Naive thymus-derived CD4-positive, alpha-beta T cell (primary cell): ENCODE measurements at regions of chr7 and their contacts with region 1.

Region 1: DNA sequence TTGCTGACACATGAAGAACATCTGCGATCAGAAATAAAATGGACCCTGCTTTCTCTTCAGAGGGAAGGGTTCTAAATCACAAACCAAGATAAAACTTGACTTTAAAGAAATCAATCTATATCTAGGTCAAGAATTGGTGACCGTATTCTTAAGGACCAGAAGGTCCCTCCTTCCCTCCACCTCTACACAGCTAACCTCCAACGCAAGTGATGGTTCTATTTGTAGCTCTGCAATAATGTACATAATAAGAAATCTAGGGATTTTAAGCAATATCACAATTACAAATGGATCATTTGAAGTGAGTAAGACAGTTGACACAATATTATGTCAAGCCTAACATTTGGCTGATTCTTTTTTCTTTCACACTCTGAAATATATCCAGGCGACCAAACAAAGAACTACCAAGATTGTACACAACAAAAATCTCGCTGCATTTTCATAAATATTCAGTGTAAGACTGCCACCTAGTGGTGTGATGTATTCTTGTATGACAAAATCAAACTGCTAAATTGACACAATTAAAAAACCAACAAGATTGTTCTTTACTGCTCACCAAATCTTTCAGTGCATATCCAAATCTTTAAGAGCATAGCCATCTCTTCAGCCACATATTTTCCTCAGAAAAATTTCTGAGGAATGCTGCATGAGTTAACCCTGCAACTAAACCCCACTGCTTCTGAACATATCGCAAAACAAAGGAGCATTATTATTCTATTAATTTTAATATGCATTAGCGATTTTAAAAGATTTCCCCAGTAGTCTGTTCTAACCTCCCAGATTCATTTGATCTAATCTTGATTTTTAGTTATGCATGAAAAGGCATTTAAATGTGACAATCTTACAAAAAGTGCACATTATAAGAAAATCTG is 44.5 kb downstream of the ICA1 start:
- DNase-seq: peak in 7 of 9 donors; percentile 42 to 76 (median 68)
- ATAC-seq: peak; percentile 84
- H3K4me3 ChIP-seq: no peak overlapping the region
- H3K4me3 Mint-ChIP-seq: no peak overlapping the region
- H3K27ac ChIP-seq: no peak overlapping the region
- H3K27ac Mint-ChIP-seq: peak overlapping the region in 1 of 9 donors; percentile 22
- H3K4me1 ChIP-seq: no peaks in the 10 kb centered on the region
- H3K4me1 Mint-ChIP-seq: peaks cover 0 to 16% (median 3%) of the 10 kb centered on the region in 7 donors
- H3K27me3 ChIP-seq: no peaks in the 10 kb centered on the region
- H3K27me3 Mint-ChIP-seq: no peaks in the 10 kb centered on the region

Region 2: DNA sequence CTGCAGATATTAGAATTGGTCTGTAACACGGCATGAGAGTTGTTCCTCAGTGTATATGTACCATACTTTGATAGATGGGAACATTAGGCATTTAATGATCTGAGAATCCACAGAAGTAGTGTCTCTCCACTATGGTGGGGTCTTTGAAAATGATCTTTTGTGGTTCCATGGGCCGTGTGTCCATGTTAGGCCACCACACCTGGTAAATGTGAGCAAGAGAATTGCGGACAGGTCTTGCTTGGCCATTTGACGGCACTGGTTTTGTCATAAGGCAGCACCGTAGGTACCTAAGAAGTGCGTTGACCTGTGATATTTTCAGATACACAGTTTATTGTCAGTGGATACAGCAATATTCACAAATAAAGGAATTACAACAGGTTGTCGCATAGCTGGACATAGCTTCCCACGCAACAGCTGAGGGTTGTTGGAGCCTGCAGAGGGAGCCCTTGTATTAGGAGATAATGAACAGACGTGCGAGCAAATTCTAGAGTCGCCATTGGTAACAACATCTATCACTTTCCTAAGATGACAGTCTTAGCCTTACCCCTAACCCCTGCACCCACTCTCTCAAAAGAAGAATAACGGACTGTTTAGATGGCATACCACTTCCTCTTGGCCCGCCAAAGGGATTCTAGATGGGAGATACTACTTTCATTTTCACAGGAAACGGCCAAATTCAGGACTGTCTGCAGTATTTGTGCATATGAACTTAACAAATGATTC is 793.1 kb before region 1 on chr7:
- CTCF ChIA-PET with region 1: no interaction called
- POLR2A ChIA-PET with region 1: no interaction called
- intact Hi-C with region 1: loop called (anchors 1 to 10 kb)
- DNase-seq: peak in 6 of 9 donors; percentile 8 to 44 (median 25)
- ATAC-seq: peak; percentile 73
- H3K4me3 ChIP-seq: peak overlapping the region; percentile 59
- H3K4me3 Mint-ChIP-seq: peak overlapping the region in 8 of 10 donors; percentile 74 to 89 (median 82)
- H3K27ac ChIP-seq: no peak overlapping the region
- H3K27ac Mint-ChIP-seq: peak overlapping the region in 7 of 9 donors; percentile 9 to 80 (median 48)
- H3K4me1 ChIP-seq: no peaks in the 10 kb centered on the region
- H3K4me1 Mint-ChIP-seq: peaks cover 0 to 12% (median 5%) of the 10 kb centered on the region in 7 donors
- H3K27me3 ChIP-seq: no peaks in the 10 kb centered on the region
- H3K27me3 Mint-ChIP-seq: no peaks in the 10 kb centered on the region

Region 3: DNA sequence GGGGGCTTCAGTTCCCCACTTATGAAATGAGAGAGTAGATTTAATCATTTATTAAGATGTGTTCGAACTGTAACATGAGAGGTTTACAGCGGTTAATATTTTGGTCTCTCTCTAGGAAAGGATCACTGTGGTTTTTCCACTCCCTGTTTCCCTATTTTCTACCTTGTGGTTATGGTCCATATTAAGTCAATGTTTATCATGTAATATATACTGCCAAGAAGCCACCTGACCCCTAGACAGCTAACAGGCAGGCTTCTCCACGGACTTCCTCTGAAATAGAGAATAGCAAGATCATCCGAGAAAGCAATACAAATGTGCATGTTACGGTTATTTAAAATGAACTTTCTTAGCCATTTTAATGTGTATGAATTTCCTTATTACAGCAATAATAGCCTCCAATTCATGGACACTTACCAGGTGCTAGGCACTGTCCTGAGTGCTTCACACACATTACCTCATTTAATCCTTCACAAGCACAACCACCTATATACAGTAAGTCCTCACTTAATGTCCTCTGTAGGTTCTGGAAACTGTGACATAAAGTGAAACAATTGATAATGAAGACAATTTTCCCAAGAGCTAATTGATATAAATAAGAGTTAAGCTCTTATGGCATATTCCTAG is 680.9 kb before region 1 on chr7:
- CTCF ChIA-PET with region 1: no interaction called
- POLR2A ChIA-PET with region 1: no interaction called
- intact Hi-C with region 1: loop called (anchors 1 to 2 kb)
- DNase-seq: no peak
- ATAC-seq: no peak
- H3K4me3 ChIP-seq: no peak overlapping the region
- H3K4me3 Mint-ChIP-seq: no peak overlapping the region
- H3K27ac ChIP-seq: no peak overlapping the region
- H3K27ac Mint-ChIP-seq: no peak overlapping the region
- H3K4me1 ChIP-seq: no peaks in the 10 kb centered on the region
- H3K4me1 Mint-ChIP-seq: peaks cover 0 to 3% (median 0%) of the 10 kb centered on the region in 7 donors
- H3K27me3 ChIP-seq: no peaks in the 10 kb centered on the region
- H3K27me3 Mint-ChIP-seq: peaks cover 0 to 26% (median 5%) of the 10 kb centered on the region in 5 donors

Region 4: DNA sequence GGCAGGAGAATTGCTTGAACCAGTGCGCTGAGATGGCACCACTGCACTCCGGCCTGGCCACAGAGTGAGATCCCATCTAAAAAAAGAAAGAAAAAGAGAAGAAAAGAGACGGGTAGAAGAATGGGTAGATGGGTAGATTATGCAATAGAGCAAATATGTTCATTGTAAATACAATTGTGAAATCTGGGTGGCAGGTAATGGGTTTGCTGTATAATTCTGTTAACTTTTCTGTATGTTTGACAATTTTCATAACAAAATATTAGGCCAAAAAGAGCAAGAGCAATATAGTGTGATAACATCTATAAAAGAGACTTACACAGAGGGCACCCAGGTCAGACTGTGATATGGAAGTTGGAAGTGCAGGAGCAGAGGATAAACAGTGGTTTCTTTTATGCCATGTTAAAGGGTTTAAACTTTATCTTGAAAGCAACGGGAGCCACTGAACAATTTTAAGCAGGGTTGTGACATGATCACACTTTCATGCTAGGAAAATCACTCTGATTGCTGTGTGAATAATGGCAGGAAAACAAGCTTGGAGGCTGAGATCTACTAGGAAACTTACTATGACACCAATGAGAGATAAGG is 675.1 kb before region 1 on chr7:
- CTCF ChIA-PET with region 1: no interaction called
- POLR2A ChIA-PET with region 1: no interaction called
- intact Hi-C with region 1: loop called (anchors 1 to 2 kb)
- DNase-seq: no peak
- ATAC-seq: no peak
- H3K4me3 ChIP-seq: no peak overlapping the region
- H3K4me3 Mint-ChIP-seq: no peak overlapping the region
- H3K27ac ChIP-seq: no peak overlapping the region
- H3K27ac Mint-ChIP-seq: no peak overlapping the region
- H3K4me1 ChIP-seq: no peaks in the 10 kb centered on the region
- H3K4me1 Mint-ChIP-seq: peaks cover 0 to 5% (median 0%) of the 10 kb centered on the region in 7 donors
- H3K27me3 ChIP-seq: no peaks in the 10 kb centered on the region
- H3K27me3 Mint-ChIP-seq: peaks cover 0 to 11% (median 5%) of the 10 kb centered on the region in 5 donors

Region 5: DNA sequence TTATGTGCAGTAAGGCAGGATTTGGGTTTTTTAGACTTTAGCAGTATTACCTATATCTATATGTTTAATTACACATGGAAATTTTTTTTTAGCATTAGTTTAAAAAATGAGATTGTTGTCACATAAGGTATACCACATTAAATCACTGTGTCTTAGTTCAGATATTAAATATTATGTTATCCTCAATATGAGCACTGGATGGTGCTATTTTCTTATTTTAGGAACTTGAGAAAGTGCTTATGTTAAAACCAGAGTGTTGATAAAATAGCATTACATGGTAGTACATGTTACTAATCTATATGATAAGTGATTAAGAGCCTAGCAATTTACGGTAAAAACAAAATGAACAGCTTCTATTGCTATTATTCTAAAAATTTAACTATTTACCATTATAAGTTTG is 622.0 kb before region 1 on chr7:
- CTCF ChIA-PET with region 1: interaction called, 24 read pairs
- POLR2A ChIA-PET with region 1: no interaction called
- intact Hi-C with region 1: loop called (anchors 1 kb)
- DNase-seq: peak in 6 of 9 donors; percentile 14 to 45 (median 36)
- ATAC-seq: peak; percentile 65
- H3K4me3 ChIP-seq: no peak overlapping the region
- H3K4me3 Mint-ChIP-seq: no peak overlapping the region
- H3K27ac ChIP-seq: no peak overlapping the region
- H3K27ac Mint-ChIP-seq: no peak overlapping the region
- H3K4me1 ChIP-seq: peaks cover 0 to 3% of the 10 kb centered on the region in 2 donors
- H3K4me1 Mint-ChIP-seq: no peaks in the 10 kb centered on the region
- H3K27me3 ChIP-seq: no peaks in the 10 kb centered on the region
- H3K27me3 Mint-ChIP-seq: no peaks in the 10 kb centered on the region

Region 6: GRCh38 chr7:7681179-7681935 is 536.1 kb before region 1 on chr7:
- CTCF ChIA-PET with region 1: interaction called, 9 read pairs
- POLR2A ChIA-PET with region 1: no interaction called
- intact Hi-C with region 1: loop called (anchors 1 kb)
- DNase-seq: peak in 7 of 9 donors; percentile 37 to 66 (median 58)
- ATAC-seq: peak; percentile 84
- H3K4me3 ChIP-seq: no peak overlapping the region
- H3K4me3 Mint-ChIP-seq: peak overlapping the region in 5 of 10 donors; percentile 8 to 56 (median 25)
- H3K27ac ChIP-seq: no peak overlapping the region
- H3K27ac Mint-ChIP-seq: peak overlapping the region; percentile 1 to 76 (median 18)
- H3K4me1 ChIP-seq: peaks cover 0 to 15% of the 10 kb centered on the region in 2 donors
- H3K4me1 Mint-ChIP-seq: peaks cover 11 to 48% (median 37%) of the 10 kb centered on the region in 7 donors
- H3K27me3 ChIP-seq: no peaks in the 10 kb centered on the region
- H3K27me3 Mint-ChIP-seq: no peaks in the 10 kb centered on the region